PC-3 (cell line): ENCODE measurements at regions of chr2 and their contacts with region 1.

Region 1: DNA sequence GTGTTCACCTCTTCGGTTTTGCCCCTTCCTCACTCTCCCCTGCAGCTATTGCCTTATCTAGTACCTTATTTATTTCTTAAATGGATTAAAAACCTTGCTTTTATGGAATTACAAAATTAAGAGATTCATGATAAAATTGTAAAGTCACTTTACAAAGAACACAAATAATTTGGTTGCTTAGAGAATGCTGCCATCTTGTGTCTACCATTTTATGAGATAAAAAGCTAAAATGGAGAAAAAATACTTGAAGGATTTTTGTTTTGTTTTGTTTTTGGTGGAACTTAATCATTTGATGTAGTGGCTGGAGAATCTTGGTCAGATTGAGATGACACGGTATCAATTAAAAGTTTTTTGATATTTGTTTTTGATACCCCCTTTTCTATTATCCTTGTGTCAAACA is 69.6 kb downstream of the R3HDM1 start:
- DNase-seq: peak; percentile 28
- ATAC-seq: no peak
- H3K4me3 ChIP-seq: no peak overlapping the region
- H3K27ac ChIP-seq: no peak overlapping the region
- H3K4me1 ChIP-seq: no peaks in the 10 kb centered on the region
- H3K27me3 ChIP-seq: no peaks in the 10 kb centered on the region
- CTCF ChIP-seq: no peak; the same call in 1 of the 2 replicates

Region 2: DNA sequence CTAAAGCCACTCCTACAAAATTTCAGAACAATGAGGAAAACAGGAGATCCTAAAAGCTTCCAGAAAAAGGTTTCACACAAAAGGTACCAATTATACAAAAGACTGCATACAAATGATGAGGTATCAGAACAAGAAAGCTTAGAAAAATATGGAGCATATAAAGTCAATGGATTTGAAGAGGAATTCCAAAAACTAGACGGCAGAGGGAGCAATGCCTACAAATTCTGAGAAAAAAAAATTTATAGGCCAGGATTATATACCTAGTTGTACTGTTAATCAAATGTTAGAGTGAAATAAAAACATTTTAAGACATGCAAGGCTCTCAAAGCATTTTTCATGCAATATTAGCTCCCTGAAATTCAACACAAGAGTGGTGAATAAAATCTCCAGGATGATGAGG is 176.1 kb before region 1 on chr2:
- CTCF ChIA-PET with region 1: no interaction called
- POLR2A ChIA-PET with region 1: no interaction called
- intact Hi-C with region 1: loop called (anchors 2 kb)
- DNase-seq: peak; percentile 45
- ATAC-seq: 0 out of 2 replicates have a peak, but pooled peaks have one; percentile 54
- H3K4me3 ChIP-seq: no peak overlapping the region
- H3K27ac ChIP-seq: no peak overlapping the region
- H3K4me1 ChIP-seq: no peaks in the 10 kb centered on the region
- H3K27me3 ChIP-seq: no peaks in the 10 kb centered on the region
- CTCF ChIP-seq: peak; percentile 71

Region 3: GRCh38 chr2:135694711-135695110 is 93.8 kb after region 1 on chr2:
- CTCF ChIA-PET with region 1: no interaction called
- POLR2A ChIA-PET with region 1: no interaction called
- intact Hi-C with region 1: no loop called
- DNase-seq: no peak
- ATAC-seq: no peak; the same call in 1 of the 2 replicates
- H3K4me3 ChIP-seq: no peak overlapping the region
- H3K27ac ChIP-seq: no peak overlapping the region
- H3K4me1 ChIP-seq: no peaks in the 10 kb centered on the region
- H3K27me3 ChIP-seq: no peaks in the 10 kb centered on the region
- CTCF ChIP-seq: no peak